ENCODE measurements at regions of chr3 and their contacts with region 1.

Region 1: GRCh38 chr3:19866751-19867347 is 67.2 kb downstream of the EFHB start:
- H3K4me3 ChIP-seq: no peak overlapping the region
- H3K27ac ChIP-seq: no peak overlapping the region
- H3K4me1 ChIP-seq: no peaks in the 10 kb centered on the region
- CTCF ChIP-seq: peak; percentile 47; the same call in 1 of the 2 replicates

Region 2: GRCh38 chr3:19348929-19349564 is 517.8 kb before region 1 on chr3:
- CTCF ChIA-PET with region 1: interaction called, 35 read pairs
- POLR2A ChIA-PET with region 1: no interaction called
- H3K4me3 ChIP-seq: no peak overlapping the region
- H3K27ac ChIP-seq: no peak overlapping the region
- H3K4me1 ChIP-seq: no peaks in the 10 kb centered on the region
- CTCF ChIP-seq: no peak

Region 3: GRCh38 chr3:19881036-19881435 is 14.2 kb after region 1 on chr3:
- CTCF ChIA-PET with region 1: interaction called, 10 read pairs
- POLR2A ChIA-PET with region 1: no interaction called
- H3K4me3 ChIP-seq: no peak overlapping the region
- H3K27ac ChIP-seq: no peak overlapping the region
- H3K4me1 ChIP-seq: no peaks in the 10 kb centered on the region
- CTCF ChIP-seq: no peak

Measured in HEK293 (cell line).